HEK293 (cell line): ENCODE measurements at regions of chr2 and their contacts with region 1.

Region 1: DNA sequence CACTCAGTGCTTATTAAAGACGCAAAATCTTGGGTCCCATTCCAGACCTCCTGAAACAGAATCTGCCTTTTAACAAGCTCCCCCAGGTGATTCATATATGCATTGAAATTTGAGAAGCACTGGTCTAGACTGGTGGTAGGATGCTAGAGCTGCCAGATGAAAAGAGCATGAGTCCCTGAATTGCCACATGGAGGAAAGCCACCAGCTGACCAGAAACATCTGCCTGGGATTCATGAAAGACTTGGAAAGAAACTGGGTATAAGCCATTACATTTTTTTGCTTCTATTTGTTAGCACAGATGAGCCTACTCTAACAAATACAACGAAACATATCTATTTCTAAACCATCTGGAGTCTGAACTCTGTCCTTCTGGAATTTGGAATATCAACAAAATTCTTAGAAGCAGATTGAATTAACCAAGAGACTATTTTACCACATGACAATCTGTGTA is 228.9 kb downstream of the RBM43 start:
- H3K4me3 ChIP-seq: no peak overlapping the region
- H3K27ac ChIP-seq: no peak overlapping the region
- H3K4me1 ChIP-seq: peaks cover 4% of the 10 kb centered on the region; the same call in 1 of the 2 replicates
- CTCF ChIP-seq: no peak

Region 2: DNA sequence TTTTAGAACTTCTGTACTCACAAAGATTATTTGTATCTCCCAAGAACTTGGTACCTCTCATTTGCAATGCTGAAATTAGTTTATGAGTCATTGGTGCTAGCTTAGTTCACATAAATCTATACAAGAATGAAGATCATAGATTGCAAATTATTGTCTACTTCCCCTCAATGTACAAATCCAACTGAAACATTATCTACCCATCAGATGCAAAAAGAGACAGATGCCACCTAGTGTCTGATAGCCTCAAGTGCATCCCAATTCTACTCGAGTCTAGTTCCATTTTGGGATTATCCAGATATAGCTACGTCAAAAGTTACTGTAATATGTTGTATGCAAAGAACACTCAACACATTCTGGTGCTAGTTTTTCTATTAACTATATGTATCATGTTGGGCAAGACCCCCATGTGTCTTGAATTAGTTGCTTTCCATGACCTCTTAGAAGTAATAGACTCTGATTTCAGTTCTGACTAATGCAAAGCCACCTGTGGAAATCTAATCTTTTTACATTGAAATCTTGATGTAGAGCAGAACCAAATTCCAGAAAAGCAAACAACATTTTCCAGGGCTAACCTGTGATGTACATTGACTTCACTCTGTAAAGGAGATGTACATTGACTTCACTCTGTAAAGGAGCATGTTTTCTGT is 18.9 kb after region 1 on chr2:
- CTCF ChIA-PET with region 1: interaction called, 15 read pairs
- POLR2A ChIA-PET with region 1: no interaction called
- H3K4me3 ChIP-seq: no peak overlapping the region
- H3K27ac ChIP-seq: no peak overlapping the region
- H3K4me1 ChIP-seq: no peaks in the 10 kb centered on the region
- CTCF ChIP-seq: peak; percentile 39; the same call in 1 of the 2 replicates